BJ (cell line): ENCODE measurements at regions of chr10 and their contacts with region 1.

Region 1: GRCh38 chr10:29908962-29909361 is 150.4 kb downstream of the JCAD start:
- DNase-seq: no peak
- H3K4me3 ChIP-seq: no peak overlapping the region
- H3K27me3 ChIP-seq: peaks cover 11% of the 10 kb centered on the region
- CTCF ChIP-seq: no peak

Region 2: DNA sequence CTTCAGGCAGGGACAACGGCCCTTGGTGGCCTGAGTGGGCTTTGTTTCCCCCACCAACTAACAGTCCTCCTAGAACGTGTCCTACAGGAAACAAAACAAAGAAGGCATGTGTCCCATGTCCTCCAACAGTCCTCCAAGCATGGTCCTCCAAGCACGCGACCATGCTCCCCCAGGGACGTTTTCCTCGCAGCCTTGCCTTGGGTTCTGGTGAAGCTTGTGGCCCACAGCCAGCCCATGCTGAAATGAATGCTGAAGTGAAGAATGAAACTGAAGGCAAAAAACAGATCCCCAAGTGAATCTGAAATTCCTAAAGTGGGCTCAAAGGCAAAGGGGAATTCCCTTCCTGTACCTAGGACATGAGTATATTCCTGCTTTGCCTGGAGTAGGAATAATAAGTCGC is 26.2 kb before region 1 on chr10:
- CTCF ChIA-PET with region 1: no interaction called
- POLR2A ChIA-PET with region 1: interaction called, 13 read pairs
- DNase-seq: no peak
- H3K4me3 ChIP-seq: no peak overlapping the region
- H3K27me3 ChIP-seq: peaks cover 36% of the 10 kb centered on the region
- CTCF ChIP-seq: no peak